Activated CD8-positive, alpha-beta T cell treated with anti-CD3 and anti-CD28 coated beads, Interleukin-2, amount 10 ng/mL, durations not matched to agents 7 days and 5 days (primary cell): ENCODE measurements at regions of chr22 and their contacts with region 1.

Region 1: DNA sequence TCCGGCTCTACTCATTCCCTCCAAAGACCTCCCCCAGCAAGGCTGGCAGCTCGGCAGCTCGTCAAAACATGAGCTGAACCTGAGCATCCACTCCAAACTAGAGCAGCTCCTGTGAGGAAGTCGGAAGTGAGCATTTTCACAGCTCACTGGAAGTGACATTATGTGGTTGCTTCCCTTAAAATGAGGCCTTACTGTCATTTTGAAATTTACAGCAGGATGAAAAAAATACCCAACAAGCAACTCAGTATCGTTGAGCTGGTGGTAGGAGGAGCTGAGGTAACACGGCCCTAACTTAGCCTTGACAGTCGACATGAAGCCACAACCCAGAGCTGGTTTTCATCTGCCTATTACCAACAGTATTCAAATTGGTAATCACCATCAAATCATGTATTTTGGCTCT is 38.0 kb upstream of the ARFGAP3 start:
- DNase-seq: peak; percentile 46
- ATAC-seq: peak; percentile 64
- H3K4me3 Mint-ChIP-seq: no peak overlapping the region
- H3K27ac Mint-ChIP-seq: peak overlapping the region; percentile 70
- H3K4me1 Mint-ChIP-seq: peaks cover 59% of the 10 kb centered on the region
- H3K27me3 Mint-ChIP-seq: no peaks in the 10 kb centered on the region

Region 2: DNA sequence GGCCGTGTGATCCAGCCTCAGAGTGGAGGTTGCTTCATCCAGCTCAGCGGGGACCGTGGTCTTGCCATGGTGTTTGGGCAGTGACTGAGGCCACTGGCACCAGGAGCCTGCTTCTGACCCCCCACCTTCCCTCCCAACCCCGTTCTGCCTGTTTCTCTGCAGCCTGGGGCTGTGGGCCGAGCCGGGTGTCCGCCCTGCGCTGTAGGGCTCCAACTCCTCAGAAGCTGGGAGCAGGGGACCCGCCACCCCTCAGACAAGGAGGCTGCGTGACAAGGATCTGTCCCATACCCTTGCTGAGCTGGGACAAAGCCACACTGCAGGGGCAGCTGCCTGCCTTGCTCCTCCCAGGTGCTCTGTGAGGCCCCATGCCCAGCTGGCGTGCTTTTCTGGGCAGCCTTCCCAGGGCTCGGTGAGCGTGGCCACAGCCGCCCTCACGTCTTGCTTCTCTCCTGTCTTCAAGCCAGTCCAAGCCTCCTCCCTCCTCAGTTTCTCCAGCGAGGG is 26.3 kb before region 1 on chr22:
- CTCF ChIA-PET with region 1: interaction called, 14 read pairs
- POLR2A ChIA-PET with region 1: no interaction called
- DNase-seq: no peak
- ATAC-seq: no peak
- H3K4me3 Mint-ChIP-seq: no peak overlapping the region
- H3K27ac Mint-ChIP-seq: no peak overlapping the region
- H3K4me1 Mint-ChIP-seq: peaks cover 6% of the 10 kb centered on the region
- H3K27me3 Mint-ChIP-seq: no peaks in the 10 kb centered on the region